ENCODE measurements at regions of chr1 and their contacts with region 1.

Region 1: GRCh38 chr1:153958111-153958960 is at the start of gene CRTC2:
- DNase-seq: peak; percentile 99
- H3K4me3 ChIP-seq: peak within 1 kb of the TSS; percentile 89 to 97
- H3K27ac ChIP-seq: peak within 1 kb of the TSS; percentile 90
- H3K4me1 ChIP-seq: peaks cover 62% of the 10 kb centered on the region
- H3K27me3 ChIP-seq: no peaks in the 10 kb centered on the region
- CTCF ChIP-seq: no peak
- POLR2A ChIP-seq: peak in 1 of 2 donors; percentile 75
- total RNA-seq, gene CRTC2: 19.2 TPM

Region 2: DNA sequence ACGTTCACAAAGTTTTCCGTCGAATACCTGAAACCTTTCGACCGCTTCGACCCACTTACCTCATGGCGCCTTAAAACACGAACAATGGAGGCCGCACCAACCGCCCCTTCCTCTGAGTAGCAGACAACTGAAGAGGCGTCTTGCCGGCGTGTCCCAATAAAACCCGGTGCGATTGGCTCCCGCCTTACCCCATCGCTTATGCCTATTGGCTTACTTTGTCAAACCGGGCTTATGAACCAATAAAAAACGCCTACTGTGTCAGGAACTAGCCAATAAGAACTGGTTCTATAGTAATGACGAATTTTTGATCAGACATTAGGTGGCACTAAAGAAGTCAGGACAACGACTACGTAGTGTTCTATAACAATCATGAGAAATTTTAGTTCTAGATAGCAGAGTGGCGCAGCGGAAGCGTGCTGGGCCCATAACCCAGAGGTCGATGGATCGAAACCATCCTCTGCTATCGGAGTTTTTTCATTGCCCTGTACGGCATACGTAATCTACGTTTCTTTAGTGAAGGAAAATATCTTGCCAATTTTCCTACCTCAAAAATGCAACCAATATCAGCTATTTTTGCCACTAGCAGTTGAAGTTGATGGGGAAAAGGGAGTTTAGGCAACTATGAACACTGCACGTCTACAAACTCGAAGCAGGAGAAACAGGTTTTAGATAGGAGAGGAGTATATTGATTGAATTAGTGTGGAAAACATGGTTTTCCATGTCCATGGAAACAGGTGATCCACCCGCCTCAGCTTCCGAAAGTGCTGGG is 287.3 kb before region 1 on chr1 and contains the start of gene ILF2:
- intact Hi-C with region 1: loop called (anchors 10 kb)
- DNase-seq: peak; percentile 98 to 99
- H3K4me3 ChIP-seq: peak within 1 kb of the TSS; percentile 84 to 85
- H3K27ac ChIP-seq: peak within 1 kb of the TSS; percentile 86
- H3K4me1 ChIP-seq: peaks cover 28% of the 10 kb centered on the region
- H3K27me3 ChIP-seq: no peaks in the 10 kb centered on the region
- CTCF ChIP-seq: no peak
- POLR2A ChIP-seq: peak in 1 of 2 donors; percentile 88
- total RNA-seq, gene ILF2: 85.4 TPM

Measured in vagina (tissue), 2 donors.